ENCODE measurements at regions of chr10 and their contacts with region 1.

Region 1: GRCh38 chr10:118568327-118568848 is 27.1 kb downstream of the PRLHR start:
- DNase-seq: peak; percentile 62
- H3K4me3 ChIP-seq: no peak overlapping the region
- H3K27ac ChIP-seq: no peak overlapping the region
- H3K4me1 ChIP-seq: no peaks in the 10 kb centered on the region
- H3K27me3 ChIP-seq: no peaks in the 10 kb centered on the region
- CTCF ChIP-seq: peak; percentile 69

Region 2: DNA sequence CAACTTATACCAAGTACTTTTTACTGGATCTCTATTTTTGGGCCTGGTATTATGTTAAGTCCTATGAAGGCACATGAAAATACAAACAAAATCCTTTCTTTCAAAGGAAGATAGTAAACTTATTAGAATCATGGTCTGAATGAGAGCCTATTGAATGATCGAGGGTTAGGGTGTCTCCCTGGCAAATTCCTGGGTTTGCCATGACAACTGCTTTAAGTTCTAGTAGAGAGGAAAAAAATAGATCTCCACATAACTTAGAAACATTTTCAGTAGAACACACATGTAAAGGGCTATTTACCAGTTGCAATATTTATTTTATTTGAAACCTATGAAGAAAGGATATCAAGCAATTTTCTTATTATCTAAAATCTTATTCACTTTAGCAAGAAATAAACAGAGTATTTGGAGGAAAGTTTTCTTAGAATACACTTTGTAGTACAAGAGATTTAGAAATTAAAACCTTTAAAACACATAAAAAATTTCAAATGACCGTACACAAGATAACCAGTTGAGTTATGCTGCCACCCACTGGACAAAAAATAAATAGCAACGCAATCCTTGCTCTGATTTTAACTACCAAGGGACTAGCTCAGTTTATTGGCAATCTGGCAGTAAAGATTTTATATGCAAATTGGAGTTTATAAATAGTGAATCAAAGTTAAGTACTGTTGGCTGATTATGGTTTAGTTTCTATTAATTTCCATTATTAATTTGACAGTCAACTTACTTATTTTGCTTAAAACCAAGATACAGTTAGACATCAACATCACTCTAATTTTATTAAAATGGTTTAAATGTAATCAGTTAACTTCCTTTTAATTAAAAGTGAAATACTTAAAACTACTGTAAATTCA is 152.5 kb after region 1 on chr10:
- intact Hi-C with region 1: loop called (anchors 2 kb)
- DNase-seq: peak; percentile 73
- H3K4me3 ChIP-seq: no peak overlapping the region
- H3K27ac ChIP-seq: no peak overlapping the region
- H3K4me1 ChIP-seq: no peaks in the 10 kb centered on the region
- H3K27me3 ChIP-seq: no peaks in the 10 kb centered on the region
- CTCF ChIP-seq: peak; percentile 93

Region 3: DNA sequence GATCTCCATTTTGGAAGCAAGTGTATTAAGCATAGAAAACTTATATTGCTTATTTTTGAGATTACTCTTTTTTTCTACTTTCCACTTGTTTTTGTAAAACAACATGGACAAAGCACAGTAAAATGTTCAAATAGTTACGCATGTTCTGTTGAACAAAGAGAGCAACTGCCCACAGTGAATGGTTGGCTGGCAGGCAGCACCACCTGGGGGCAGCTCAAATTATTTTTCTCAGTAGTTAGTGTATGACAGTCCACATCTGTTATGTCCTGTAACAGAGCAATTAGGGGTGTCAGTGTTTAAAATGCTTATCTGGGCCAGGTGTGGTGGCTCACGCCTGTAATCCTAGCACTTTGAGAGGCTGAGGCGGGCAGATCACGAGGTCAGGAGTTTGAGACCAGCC is 232.5 kb after region 1 on chr10:
- intact Hi-C with region 1: loop called (anchors 5 kb)
- DNase-seq: no peak
- H3K4me3 ChIP-seq: no peak overlapping the region
- H3K27ac ChIP-seq: no peak overlapping the region
- H3K4me1 ChIP-seq: no peaks in the 10 kb centered on the region
- H3K27me3 ChIP-seq: no peaks in the 10 kb centered on the region
- CTCF ChIP-seq: peak; percentile 33

Region 4: GRCh38 chr10:118850418-118851061 is 282.2 kb after region 1 on chr10:
- intact Hi-C with region 1: loop called (anchors 2 kb)
- DNase-seq: peak; percentile 70
- H3K4me3 ChIP-seq: no peak overlapping the region
- H3K27ac ChIP-seq: no peak overlapping the region
- H3K4me1 ChIP-seq: no peaks in the 10 kb centered on the region
- H3K27me3 ChIP-seq: no peaks in the 10 kb centered on the region
- CTCF ChIP-seq: peak; percentile 69